ENCODE measurements at regions of chr14 and their contacts with region 1.

Region 1: GRCh38 chr14:71138448-71139293 is 231.4 kb downstream of the PCNX1 start:
- DNase-seq: peak; percentile 80
- ATAC-seq: peak; percentile 27
- H3K4me3 ChIP-seq: 0 out of 2 replicates have a peak overlapping the region, but pooled peaks have one; percentile 10
- H3K27ac ChIP-seq: peak overlapping the region; percentile 15; the same call in 1 of the 2 replicates
- H3K4me1 ChIP-seq: peaks cover 33% of the 10 kb centered on the region
- H3K27me3 ChIP-seq: no peaks in the 10 kb centered on the region
- CTCF ChIP-seq: peak; percentile 99

Region 2: DNA sequence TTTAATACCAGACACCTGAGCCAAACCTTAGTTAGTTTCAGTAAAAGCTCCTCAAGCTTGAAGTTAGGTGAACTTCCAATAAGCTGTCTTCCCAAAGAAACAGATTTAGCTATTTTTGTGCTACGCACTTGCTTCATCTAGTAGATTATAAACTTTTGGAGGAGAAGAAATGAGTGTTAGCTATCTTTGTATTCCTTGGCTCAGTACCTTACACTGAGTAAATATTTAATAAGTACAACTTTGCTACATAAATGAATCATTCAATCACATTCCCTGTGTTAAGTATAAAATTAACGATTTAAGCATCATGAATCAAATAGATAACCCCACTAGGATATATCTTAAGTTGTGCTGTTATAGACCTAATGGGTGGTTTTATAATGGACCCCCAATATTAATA is 75.6 kb after region 1 on chr14:
- CTCF ChIA-PET with region 1: no interaction called
- POLR2A ChIA-PET with region 1: no interaction called
- intact Hi-C with region 1: loop called (anchors 2 kb)
- DNase-seq: peak; percentile 50
- ATAC-seq: peak; percentile 91
- H3K4me3 ChIP-seq: no peak overlapping the region
- H3K27ac ChIP-seq: no peak overlapping the region
- H3K4me1 ChIP-seq: peaks cover 17% of the 10 kb centered on the region
- H3K27me3 ChIP-seq: no peaks in the 10 kb centered on the region
- CTCF ChIP-seq: no peak

Region 3: DNA sequence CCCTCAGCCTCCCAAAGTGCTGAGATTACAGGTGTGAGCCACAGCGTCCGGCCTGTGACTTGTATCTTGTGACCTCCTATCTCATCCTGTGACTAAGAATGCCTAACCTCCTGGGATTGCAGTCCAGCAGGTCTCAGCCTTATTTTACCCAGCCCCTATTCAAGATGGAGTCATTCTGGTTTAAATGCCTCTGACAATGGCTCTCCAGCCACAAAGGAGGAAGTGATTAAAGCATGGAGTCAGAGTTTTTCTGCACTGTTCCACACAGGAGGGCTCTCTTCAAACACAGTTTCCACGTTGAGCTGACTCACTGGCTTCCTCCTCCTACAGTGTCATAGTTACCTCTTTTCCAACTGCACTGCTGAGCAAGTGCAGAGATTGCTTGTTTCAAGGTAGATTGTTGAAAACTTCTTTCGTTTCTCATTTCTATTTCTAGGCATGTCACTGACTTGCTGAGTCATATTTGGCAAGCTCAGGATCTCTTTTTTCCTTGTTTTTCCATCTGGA is 152.3 kb after region 1 on chr14:
- CTCF ChIA-PET with region 1: interaction called, 4 read pairs
- POLR2A ChIA-PET with region 1: interaction called, 11 read pairs
- intact Hi-C with region 1: loop called (anchors 1 kb)
- DNase-seq: peak; percentile 99
- ATAC-seq: peak; percentile 95
- H3K4me3 ChIP-seq: no peak overlapping the region; the same call in 1 of the 2 replicates
- H3K27ac ChIP-seq: peak overlapping the region; percentile 94
- H3K4me1 ChIP-seq: peaks cover 46% of the 10 kb centered on the region
- H3K27me3 ChIP-seq: no peaks in the 10 kb centered on the region
- CTCF ChIP-seq: no peak

Region 4: GRCh38 chr14:71452987-71453386 is 314.3 kb after region 1 on chr14:
- CTCF ChIA-PET with region 1: no interaction called
- POLR2A ChIA-PET with region 1: no interaction called
- intact Hi-C with region 1: loop called (anchors 1 kb)
- DNase-seq: no peak
- ATAC-seq: no peak
- H3K4me3 ChIP-seq: no peak overlapping the region
- H3K27ac ChIP-seq: no peak overlapping the region
- H3K4me1 ChIP-seq: peaks cover 65% of the 10 kb centered on the region
- H3K27me3 ChIP-seq: no peaks in the 10 kb centered on the region
- CTCF ChIP-seq: no peak

Region 5: GRCh38 chr14:71574976-71575375 is 436.3 kb after region 1 on chr14:
- CTCF ChIA-PET with region 1: no interaction called
- POLR2A ChIA-PET with region 1: no interaction called
- intact Hi-C with region 1: loop called (anchors 5 kb)
- DNase-seq: peak; percentile 89
- ATAC-seq: peak; percentile 90
- H3K4me3 ChIP-seq: peak overlapping the region; percentile 13; the same call in 1 of the 2 replicates
- H3K27ac ChIP-seq: no peak overlapping the region
- H3K4me1 ChIP-seq: peaks cover 30% of the 10 kb centered on the region
- H3K27me3 ChIP-seq: no peaks in the 10 kb centered on the region
- CTCF ChIP-seq: no peak

Region 6: DNA sequence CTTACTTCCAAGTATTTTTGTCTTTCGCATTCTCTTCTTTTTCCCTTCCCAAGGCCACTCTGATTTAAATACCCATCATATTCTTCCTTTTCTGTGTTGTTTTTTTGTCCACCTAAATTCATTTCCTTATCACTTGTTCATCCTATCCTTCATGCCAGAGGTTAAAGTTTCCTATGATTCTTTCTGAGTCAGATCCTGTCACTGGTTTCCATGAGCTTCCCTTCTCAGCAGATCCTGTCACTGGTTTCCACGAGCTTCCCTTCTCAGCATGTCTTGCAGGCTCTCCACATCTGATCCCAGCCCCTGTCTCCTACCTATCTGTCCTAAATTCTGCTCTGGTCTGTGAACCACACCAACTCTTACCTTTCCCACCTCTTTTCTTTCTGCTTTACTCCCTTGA is 481.7 kb after region 1 on chr14:
- CTCF ChIA-PET with region 1: no interaction called
- POLR2A ChIA-PET with region 1: no interaction called
- intact Hi-C with region 1: no loop called
- DNase-seq: peak; percentile 80
- ATAC-seq: peak; percentile 85
- H3K4me3 ChIP-seq: no peak overlapping the region
- H3K27ac ChIP-seq: peak overlapping the region; percentile 74
- H3K4me1 ChIP-seq: peaks cover 35% of the 10 kb centered on the region
- H3K27me3 ChIP-seq: no peaks in the 10 kb centered on the region
- CTCF ChIP-seq: no peak

Region 7: GRCh38 chr14:71753126-71753830 is 614.6 kb after region 1 on chr14:
- CTCF ChIA-PET with region 1: interaction called, 10 read pairs
- POLR2A ChIA-PET with region 1: no interaction called
- intact Hi-C with region 1: loop called (anchors 1 kb)
- DNase-seq: peak; percentile 94
- ATAC-seq: peak; percentile 85
- H3K4me3 ChIP-seq: peak overlapping the region; percentile 46; the same call in 1 of the 2 replicates
- H3K27ac ChIP-seq: no peak overlapping the region
- H3K4me1 ChIP-seq: peaks cover 5% of the 10 kb centered on the region
- H3K27me3 ChIP-seq: no peaks in the 10 kb centered on the region
- CTCF ChIP-seq: peak; percentile 98